ENCODE measurements at regions of chr7 and their contacts with region 1.

Region 1: GRCh38 chr7:29573567-29573966 is 9.9 kb downstream of the PRR15 start:
- DNase-seq: no peak
- ATAC-seq: no peak
- H3K4me3 ChIP-seq: no peak overlapping the region
- H3K4me3 Mint-ChIP-seq: no peak overlapping the region
- H3K27ac ChIP-seq: no peak overlapping the region
- H3K27ac Mint-ChIP-seq: no peak overlapping the region
- H3K4me1 ChIP-seq: no peaks in the 10 kb centered on the region
- H3K4me1 Mint-ChIP-seq: no peaks in the 10 kb centered on the region
- H3K27me3 ChIP-seq: peaks cover 2% of the 10 kb centered on the region
- H3K27me3 Mint-ChIP-seq: peaks cover 30 to 73% of the 10 kb centered on the region in 2 donors
- CTCF ChIP-seq: no peak

Region 2: DNA sequence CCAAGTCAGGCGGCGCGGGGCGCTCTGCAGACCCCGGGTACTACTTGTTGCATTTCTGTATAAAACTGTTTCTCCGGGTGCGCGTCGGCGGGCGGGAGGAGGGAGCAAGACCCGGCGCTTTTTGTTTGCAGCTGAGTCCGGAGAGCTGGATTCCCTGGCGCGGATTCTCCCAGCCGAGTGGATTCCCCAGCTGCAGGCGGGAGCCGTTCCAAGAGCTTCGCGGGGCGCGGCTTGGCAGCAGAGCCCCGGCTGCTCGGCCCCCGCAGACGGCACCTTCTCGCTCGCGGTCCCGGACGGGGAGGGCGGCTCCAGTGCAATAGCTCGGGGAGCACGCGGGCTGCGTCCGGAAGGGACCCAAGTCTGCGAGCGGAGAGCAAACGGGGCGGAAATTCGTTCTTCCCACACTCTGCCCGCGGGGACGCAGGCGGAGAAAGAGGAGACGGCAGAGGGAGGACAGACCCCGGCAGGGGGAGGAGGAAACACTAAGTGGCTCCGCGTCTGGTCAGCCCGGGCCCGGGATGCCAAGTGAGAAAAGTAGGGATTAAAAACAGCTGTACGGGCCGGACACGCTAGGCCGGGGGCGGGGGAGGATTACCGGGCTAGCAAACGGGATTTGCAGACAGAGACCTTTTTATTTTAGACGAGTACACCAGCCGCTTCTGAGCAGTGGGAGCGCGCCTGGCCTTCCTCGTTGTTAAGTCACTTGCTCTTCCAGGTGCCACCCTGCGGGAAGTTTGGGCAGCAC is 615.2 kb before region 1 on chr7 and contains the start of gene TRIL:
- intact Hi-C with region 1: no loop called
- DNase-seq: no peak
- ATAC-seq: peak in 1 of 3 donors; percentile 23
- H3K4me3 ChIP-seq: no peak within 1 kb of the TSS
- H3K4me3 Mint-ChIP-seq: peak within 1 kb of the TSS; percentile 79
- H3K27ac ChIP-seq: no peak within 1 kb of the TSS
- H3K27ac Mint-ChIP-seq: no peak within 1 kb of the TSS
- H3K4me1 ChIP-seq: peaks cover 34% of the 10 kb centered on the region
- H3K4me1 Mint-ChIP-seq: peaks cover 14 to 17% of the 10 kb centered on the region in 2 donors
- H3K27me3 ChIP-seq: peaks cover 35% of the 10 kb centered on the region
- H3K27me3 Mint-ChIP-seq: peaks cover 39 to 45% of the 10 kb centered on the region in 2 donors
- CTCF ChIP-seq: no peak
- total RNA-seq, gene TRIL: 0.07 TPM in 1 of 3 donors, not detected in the others

Region 3: GRCh38 chr7:29592866-29593265 is 19.3 kb after region 1 on chr7:
- intact Hi-C with region 1: loop called (anchors 1 kb)
- DNase-seq: no peak
- ATAC-seq: no peak
- H3K4me3 ChIP-seq: no peak overlapping the region
- H3K4me3 Mint-ChIP-seq: no peak overlapping the region
- H3K27ac ChIP-seq: no peak overlapping the region
- H3K27ac Mint-ChIP-seq: no peak overlapping the region
- H3K4me1 ChIP-seq: no peaks in the 10 kb centered on the region
- H3K4me1 Mint-ChIP-seq: peaks cover 11% of the 10 kb centered on the region in 2 donors
- H3K27me3 ChIP-seq: no peaks in the 10 kb centered on the region
- H3K27me3 Mint-ChIP-seq: peaks cover 0 to 17% of the 10 kb centered on the region in 2 donors
- CTCF ChIP-seq: no peak

Measured in natural killer cell (primary cell).